ENCODE measurements at regions of chr11 and their contacts with region 1.

Region 1: GRCh38 chr11:118145285-118146227 is 7.1 kb downstream of the SCN4B start:
- DNase-seq: peak; percentile 81 to 91
- H3K4me3 ChIP-seq: peak overlapping the region; percentile 55
- H3K27ac ChIP-seq: no peak overlapping the region
- H3K4me1 ChIP-seq: peaks cover 6% of the 10 kb centered on the region; the same call in 1 of the 2 replicates
- H3K27me3 ChIP-seq: peaks cover 29% of the 10 kb centered on the region
- CTCF ChIP-seq: peak; percentile 94

Region 2: GRCh38 chr11:117817368-117818040 is 328.1 kb before region 1 on chr11:
- CTCF ChIA-PET with region 1: no interaction called
- POLR2A ChIA-PET with region 1: no interaction called
- intact Hi-C with region 1: loop called (anchors 2 kb)
- DNase-seq: peak; percentile 54 to 70
- H3K4me3 ChIP-seq: no peak overlapping the region
- H3K27ac ChIP-seq: no peak overlapping the region
- H3K4me1 ChIP-seq: 0 out of 2 replicates have a peak, but pooled peaks cover 6% of the 10 kb centered on the region
- H3K27me3 ChIP-seq: no peaks in the 10 kb centered on the region
- CTCF ChIP-seq: peak; percentile 99

Region 3: GRCh38 chr11:117876341-117877119 is 269.0 kb before region 1 on chr11 and contains the start of gene FXYD6:
- CTCF ChIA-PET with region 1: no interaction called
- POLR2A ChIA-PET with region 1: no interaction called
- intact Hi-C with region 1: no loop called
- DNase-seq: no peak
- H3K4me3 ChIP-seq: no peak within 1 kb of the TSS
- H3K27ac ChIP-seq: no peak within 1 kb of the TSS
- H3K4me1 ChIP-seq: no peaks in the 10 kb centered on the region
- H3K27me3 ChIP-seq: peaks cover 98% of the 10 kb centered on the region
- CTCF ChIP-seq: no peak
- total RNA-seq, gene FXYD6: 0.20 and 0.48 TPM in 2 replicates

Region 4: GRCh38 chr11:118198370-118198769 is 52.8 kb after region 1 on chr11:
- CTCF ChIA-PET with region 1: interaction called, 5 read pairs
- POLR2A ChIA-PET with region 1: no interaction called
- intact Hi-C with region 1: loop called (anchors 2 kb)
- DNase-seq: peak in 1 of 2 experiments; percentile 74
- H3K4me3 ChIP-seq: peak overlapping the region; percentile 44; the same call in 1 of the 2 replicates
- H3K27ac ChIP-seq: no peak overlapping the region
- H3K4me1 ChIP-seq: peaks cover 16% of the 10 kb centered on the region
- H3K27me3 ChIP-seq: no peaks in the 10 kb centered on the region
- CTCF ChIP-seq: peak; percentile 98

Region 5: GRCh38 chr11:118359295-118359958 is 213.9 kb after region 1 on chr11 and contains the start of gene UBE4A:
- CTCF ChIA-PET with region 1: no interaction called
- POLR2A ChIA-PET with region 1: no interaction called
- intact Hi-C with region 1: loop called (anchors 2 kb)
- DNase-seq: peak; percentile 81 to 89
- H3K4me3 ChIP-seq: peak within 1 kb of the TSS; percentile 85
- H3K27ac ChIP-seq: 0 out of 2 replicates have a peak within 1 kb of the TSS, but pooled peaks have one; percentile 25
- H3K4me1 ChIP-seq: peaks cover 16% of the 10 kb centered on the region; the same call in 1 of the 2 replicates
- H3K27me3 ChIP-seq: no peaks in the 10 kb centered on the region
- CTCF ChIP-seq: no peak
- total RNA-seq, gene UBE4A: 24.9 and 30.9 TPM in 2 replicates

Region 6: GRCh38 chr11:118572061-118572980 is 426.8 kb after region 1 on chr11 and contains the start of gene ARCN1:
- CTCF ChIA-PET with region 1: no interaction called
- POLR2A ChIA-PET with region 1: no interaction called
- intact Hi-C with region 1: loop called (anchors 2 kb)
- DNase-seq: peak; percentile 56 to 61
- H3K4me3 ChIP-seq: peak within 1 kb of the TSS; percentile 98
- H3K27ac ChIP-seq: peak within 1 kb of the TSS; percentile 83
- H3K4me1 ChIP-seq: peaks cover 28% of the 10 kb centered on the region
- H3K27me3 ChIP-seq: no peaks in the 10 kb centered on the region
- CTCF ChIP-seq: no peak
- total RNA-seq, gene ARCN1: 79.8 and 105 TPM in 2 replicates

Region 7: DNA sequence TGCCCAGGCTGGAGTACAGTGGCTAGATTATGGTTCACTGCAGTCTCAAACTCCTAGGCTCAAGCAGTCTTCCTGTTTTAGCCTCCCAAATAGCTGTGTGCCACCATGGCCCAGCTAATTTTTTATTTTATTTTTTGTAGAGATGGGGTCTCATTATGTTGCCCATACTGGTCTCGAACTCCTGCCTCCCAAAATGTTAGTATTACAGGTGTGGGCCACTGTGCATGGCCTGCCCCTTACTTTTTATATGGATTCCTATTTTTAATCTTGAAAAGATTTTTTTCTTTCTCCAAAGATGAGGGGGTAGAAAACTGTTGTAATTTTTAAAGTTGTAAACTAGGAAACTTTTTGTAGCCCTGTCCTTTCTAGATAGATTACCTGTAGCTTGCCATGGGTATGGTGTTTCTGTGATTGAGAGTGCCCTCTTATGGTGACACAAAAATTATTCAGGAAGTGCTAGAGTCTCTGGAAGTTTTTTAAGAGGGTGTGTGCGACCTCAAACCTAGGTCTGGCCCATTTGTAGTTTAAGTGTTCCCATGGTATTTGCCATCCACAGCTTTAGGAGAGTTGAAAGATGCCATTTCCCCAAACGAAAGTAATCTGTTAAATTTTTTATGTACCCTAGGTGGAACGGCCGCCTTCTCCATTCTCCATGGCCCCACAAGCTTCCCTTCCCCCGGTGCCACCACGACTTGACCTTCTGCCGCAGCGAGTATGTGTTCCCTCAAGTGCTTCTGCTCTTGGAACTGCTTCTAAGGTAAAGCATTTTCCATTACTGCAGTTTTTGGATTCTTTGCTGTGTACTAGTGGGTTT is 1139.0 kb after region 1 on chr11:
- CTCF ChIA-PET with region 1: interaction called, 10 read pairs
- POLR2A ChIA-PET with region 1: no interaction called
- intact Hi-C with region 1: no loop called
- DNase-seq: peak in 1 of 2 experiments; percentile 52
- H3K4me3 ChIP-seq: no peak overlapping the region
- H3K27ac ChIP-seq: no peak overlapping the region
- H3K4me1 ChIP-seq: no peaks in the 10 kb centered on the region
- H3K27me3 ChIP-seq: no peaks in the 10 kb centered on the region
- CTCF ChIP-seq: peak; percentile 71

Measured in PC-9 (cell line).